Left ventricle myocardium superior (tissue), 1 donor: ENCODE measurements at regions of chr13 and their contacts with region 1.

Region 1: GRCh38 chr13:30408319-30409101 is 13.8 kb upstream of the UBE2L5 start:
- DNase-seq: peak; percentile 97
- ATAC-seq: peak; percentile 95

Region 2: GRCh38 chr13:30307194-30307970 is 101.1 kb before region 1 on chr13 and contains the start of gene KATNAL1:
- intact Hi-C with region 1: no loop called
- DNase-seq: peak; percentile 92
- ATAC-seq: peak; percentile 92
- total RNA-seq, gene KATNAL1: 36.6 TPM

Region 3: DNA sequence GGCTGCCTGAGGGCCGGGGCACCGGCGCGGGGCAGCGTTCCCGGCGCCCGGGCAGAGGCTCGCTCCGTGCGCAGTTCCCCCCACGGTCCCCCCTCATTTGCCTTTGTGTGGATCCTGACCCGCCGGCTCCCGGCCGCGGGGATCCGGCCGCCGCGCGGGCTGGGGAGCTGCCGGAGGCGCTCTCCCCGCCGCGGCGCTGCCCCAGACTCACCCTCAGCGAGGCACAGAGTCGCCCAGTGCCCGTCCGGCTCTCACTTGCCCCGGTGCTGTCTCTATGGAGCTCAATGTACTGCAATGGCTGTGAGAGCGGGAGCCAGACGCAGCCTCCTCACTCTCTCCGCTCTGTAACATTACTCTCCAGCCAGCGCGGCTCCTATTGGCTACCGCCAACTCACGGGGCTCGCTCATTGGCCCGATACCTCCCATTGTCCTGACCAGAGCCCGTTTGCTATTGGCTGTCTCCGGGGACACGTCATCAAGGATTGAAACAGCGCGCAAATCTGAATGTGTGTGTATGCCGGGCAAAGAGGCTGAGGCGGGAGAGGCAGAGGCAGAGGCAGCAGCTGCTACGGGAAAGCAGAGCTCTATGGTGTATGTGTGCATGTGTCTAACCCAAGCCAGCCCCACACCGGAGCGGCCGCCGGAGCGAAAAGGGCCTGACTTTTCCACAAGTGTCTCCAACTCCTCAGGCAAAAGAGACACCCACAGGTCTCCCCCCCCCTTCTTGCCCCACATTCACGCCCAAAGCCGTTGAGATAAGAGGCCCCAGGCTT is 57.3 kb after region 1 on chr13 and contains the start of gene HMGB1:
- intact Hi-C with region 1: loop called (anchors 10 kb)
- DNase-seq: peak; percentile 98
- ATAC-seq: peak; percentile 96
- total RNA-seq, gene HMGB1: 180 TPM

Region 4: DNA sequence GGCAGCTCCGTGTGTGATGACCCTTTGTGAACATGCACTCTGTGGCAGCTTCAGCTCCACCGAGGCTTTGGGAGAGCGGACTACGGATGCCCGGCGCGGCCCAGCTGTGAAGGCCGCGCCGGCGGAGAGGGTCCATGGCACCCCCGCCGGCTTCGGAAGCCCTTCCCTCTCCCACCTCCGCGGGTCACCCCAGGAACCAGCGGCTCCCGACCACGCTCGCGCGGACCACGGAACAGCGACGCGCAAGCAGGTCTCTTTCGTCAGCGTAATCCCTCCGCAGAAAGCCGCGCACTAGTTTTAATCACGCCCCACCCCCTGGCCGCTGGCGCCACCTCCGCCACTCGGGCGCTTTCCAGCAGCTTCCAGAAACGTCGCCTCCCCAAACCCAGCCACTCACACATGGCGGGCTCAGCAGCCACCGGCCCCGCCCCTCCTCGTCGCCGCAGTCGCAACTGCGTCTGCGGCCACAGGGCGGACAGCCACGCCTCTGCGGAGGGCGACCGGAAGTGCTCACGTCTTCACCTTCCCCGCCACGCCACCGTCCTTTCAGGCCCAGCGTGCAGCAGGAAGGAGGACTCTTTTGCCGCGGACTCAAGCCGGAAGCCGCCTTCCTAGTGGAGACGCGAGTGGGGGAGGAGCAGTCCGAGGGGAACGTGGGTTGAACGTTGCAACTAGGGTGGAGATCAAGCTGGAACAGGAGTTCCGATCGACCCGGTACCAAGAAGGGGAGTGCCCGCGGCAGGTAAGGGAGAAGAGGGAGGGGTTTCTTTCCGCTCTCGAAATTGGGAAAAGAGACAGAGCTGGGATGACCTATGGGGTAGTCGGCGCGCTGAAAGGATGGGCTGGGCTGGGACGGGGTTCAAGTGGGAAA is 209.0 kb after region 1 on chr13 and contains the start of gene USPL1:
- intact Hi-C with region 1: loop called (anchors 5 kb)
- DNase-seq: peak; percentile 99
- ATAC-seq: peak; percentile 96
- total RNA-seq, gene USPL1: 10.5 TPM

Region 5: DNA sequence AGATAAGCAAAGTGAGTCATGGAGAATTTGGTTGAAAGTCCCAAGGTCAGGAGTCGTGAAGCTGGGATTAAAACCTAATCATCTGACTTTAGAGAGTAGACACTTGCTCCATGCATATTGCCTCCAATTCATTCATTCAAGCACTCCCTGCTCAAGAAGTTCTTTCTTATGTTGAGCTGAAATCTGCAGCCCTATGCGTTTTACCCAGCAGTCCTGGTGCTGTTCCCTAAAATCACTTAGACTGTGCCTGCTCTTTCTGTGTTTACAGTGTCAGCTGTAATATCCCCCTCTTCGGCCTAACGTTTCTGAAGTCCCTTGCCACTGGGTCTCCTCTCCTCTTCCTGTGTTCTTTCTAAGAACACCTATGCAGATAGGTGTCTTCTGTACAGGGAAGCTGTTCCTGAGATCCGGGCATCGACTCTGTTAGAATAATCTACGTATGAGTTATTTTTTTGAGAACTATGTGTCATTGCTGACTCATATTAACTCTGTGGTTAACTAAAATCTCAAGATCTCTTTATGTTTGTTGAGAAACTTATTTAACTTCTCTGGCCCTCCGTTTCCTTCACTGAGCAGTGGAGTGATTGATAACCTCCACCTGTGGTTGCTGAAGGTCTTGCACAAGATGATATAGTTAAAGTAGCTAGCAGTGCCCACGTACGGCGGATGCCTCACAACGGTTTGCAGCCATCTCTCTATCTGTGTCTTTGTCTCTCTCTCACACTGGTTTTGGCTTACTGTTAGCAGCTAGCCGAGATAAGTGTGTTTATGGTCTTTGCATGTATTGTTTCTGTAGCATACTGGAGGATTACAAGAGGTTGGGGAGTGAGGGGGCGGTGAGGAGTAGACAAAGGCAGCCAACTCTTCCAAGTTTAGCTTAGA is 331.5 kb after region 1 on chr13:
- intact Hi-C with region 1: no loop called
- DNase-seq: no peak
- ATAC-seq: no peak

Region 6: GRCh38 chr13:30972832-30973377 is 564.4 kb after region 1 on chr13:
- intact Hi-C with region 1: no loop called
- DNase-seq: no peak
- ATAC-seq: no peak